Breast epithelium (tissue), 4 donors: ENCODE measurements at regions of chr1 and their contacts with region 1.

Region 1: GRCh38 chr1:55876276-55877060 is 661.3 kb upstream of the USP24 start:
- DNase-seq: no peak
- H3K4me3 ChIP-seq: no peak overlapping the region
- H3K27ac ChIP-seq: no peak overlapping the region
- H3K4me1 ChIP-seq: no peaks in the 10 kb centered on the region
- H3K27me3 ChIP-seq: no peaks in the 10 kb centered on the region
- CTCF ChIP-seq: no peak
- POLR2A ChIP-seq: no peak

Region 2: DNA sequence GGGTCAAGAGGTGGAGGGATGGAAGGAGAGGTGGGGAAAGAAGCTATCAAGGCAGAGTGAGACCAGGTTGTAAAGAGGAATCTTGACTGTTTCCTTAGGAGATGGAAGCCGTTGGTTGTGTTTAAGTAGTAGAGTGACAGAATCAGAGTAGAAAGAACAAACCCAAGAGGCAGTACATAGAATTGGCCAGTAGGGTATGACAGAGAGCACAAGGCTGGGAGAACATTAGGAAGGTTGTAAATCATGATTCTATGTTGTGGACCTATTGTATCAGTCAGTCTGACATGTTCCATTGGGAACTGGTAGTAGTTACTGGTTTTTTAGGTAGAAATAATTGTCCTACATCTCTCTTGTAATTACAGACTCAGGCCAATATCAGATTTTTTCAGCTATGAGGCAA is 174.4 kb before region 1 on chr1:
- intact Hi-C with region 1: no loop called
- DNase-seq: no peak
- H3K4me3 ChIP-seq: no peak overlapping the region
- H3K27ac ChIP-seq: no peak overlapping the region
- H3K4me1 ChIP-seq: no peaks in the 10 kb centered on the region
- H3K27me3 ChIP-seq: no peaks in the 10 kb centered on the region
- CTCF ChIP-seq: peak in 2 of 3 donors; percentile 44 to 51
- POLR2A ChIP-seq: no peak

Region 3: DNA sequence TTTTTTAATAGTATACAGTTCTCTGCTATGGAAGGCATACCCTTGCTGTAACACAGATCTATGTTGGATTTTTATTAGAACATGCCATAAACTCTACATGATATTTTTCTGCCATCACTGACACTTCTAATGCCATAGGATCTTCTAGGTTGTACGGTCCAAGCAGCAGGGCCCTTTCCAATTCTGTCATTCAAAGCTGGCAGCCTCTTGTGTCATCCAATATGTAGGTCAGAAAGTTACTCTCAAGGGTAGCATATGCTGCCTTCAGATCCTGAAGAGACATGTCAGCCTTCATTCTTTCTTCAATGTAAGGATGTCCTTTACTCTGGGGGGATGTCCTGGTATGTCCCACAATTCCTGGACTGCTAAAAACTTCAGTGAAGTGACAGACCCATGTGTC is 32.1 kb before region 1 on chr1:
- intact Hi-C with region 1: loop called (anchors 1 kb)
- DNase-seq: no peak
- H3K4me3 ChIP-seq: no peak overlapping the region
- H3K27ac ChIP-seq: no peak overlapping the region
- H3K4me1 ChIP-seq: no peaks in the 10 kb centered on the region
- H3K27me3 ChIP-seq: no peaks in the 10 kb centered on the region
- CTCF ChIP-seq: no peak
- POLR2A ChIP-seq: no peak

Region 4: GRCh38 chr1:55860798-55861519 is 15.5 kb before region 1 on chr1:
- intact Hi-C with region 1: no loop called
- DNase-seq: no peak
- H3K4me3 ChIP-seq: no peak overlapping the region
- H3K27ac ChIP-seq: no peak overlapping the region
- H3K4me1 ChIP-seq: no peaks in the 10 kb centered on the region
- H3K27me3 ChIP-seq: no peaks in the 10 kb centered on the region
- CTCF ChIP-seq: no peak
- POLR2A ChIP-seq: no peak